HCT116 (cell line): ENCODE measurements at regions of chr14 and their contacts with region 1.

Region 1: GRCh38 chr14:41280745-41281144 is 325.9 kb upstream of the LRFN5 start:
- DNase-seq: no peak
- ATAC-seq: no peak
- H3K4me3 ChIP-seq: no peak overlapping the region
- H3K27ac ChIP-seq: no peak overlapping the region
- H3K4me1 ChIP-seq: no peaks in the 10 kb centered on the region
- H3K27me3 ChIP-seq: no peaks in the 10 kb centered on the region
- CTCF ChIP-seq: peak in 1 of 3 experiments; percentile 35; a peak in 2 of 6 replicates
- POLR2A ChIP-seq: no peak
- RAD21 ChIP-seq: peak; percentile 39; the same call in 1 of the 2 replicates

Region 2: DNA sequence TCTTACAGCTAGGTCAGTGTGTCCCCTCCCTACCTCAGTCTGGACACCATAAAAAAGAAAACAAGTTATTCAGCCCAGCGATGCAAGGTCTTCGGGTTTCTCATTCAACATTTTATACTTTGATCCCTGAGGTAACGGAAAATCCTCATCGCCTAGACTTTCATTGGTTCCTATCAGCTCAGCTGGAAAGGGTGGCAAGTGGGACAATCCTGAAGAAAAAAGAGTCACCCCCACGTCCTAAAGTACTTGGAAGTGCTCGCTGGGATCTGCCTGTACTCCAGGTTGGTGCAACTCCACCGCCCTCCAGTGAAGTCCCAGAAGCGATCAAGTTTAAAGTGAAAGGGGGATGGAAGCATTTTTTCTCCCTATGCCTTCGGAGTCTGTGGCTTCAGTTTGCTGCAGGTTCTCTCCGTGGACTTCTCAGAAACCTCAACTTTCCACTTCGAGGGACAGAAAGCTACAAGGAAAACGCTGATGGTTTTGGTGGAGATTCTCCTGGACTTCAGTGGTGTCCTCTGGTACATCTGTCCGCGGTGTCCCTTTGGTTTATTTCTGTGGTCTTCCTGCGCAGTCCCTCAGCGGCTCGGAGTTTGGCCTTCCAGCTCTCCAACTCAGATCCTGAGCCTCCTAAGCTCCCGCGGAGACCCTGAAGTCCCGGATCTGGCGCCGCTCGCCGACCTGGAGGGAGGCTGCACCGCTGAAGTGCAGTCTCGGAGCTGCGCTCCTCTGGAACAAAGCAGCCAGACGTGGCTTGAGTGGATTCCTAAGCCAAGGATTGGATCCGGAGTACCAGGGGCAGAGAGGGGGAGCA is 324.2 kb after region 1 on chr14:
- CTCF ChIA-PET with region 1: interaction called, 11 read pairs
- POLR2A ChIA-PET with region 1: no interaction called
- RAD21 ChIA-PET with region 1: no interaction called
- intact Hi-C with region 1: loop called (anchors 5 kb)
- DNase-seq: no peak
- ATAC-seq: no peak
- H3K4me3 ChIP-seq: no peak overlapping the region
- H3K27ac ChIP-seq: no peak overlapping the region
- H3K4me1 ChIP-seq: no peaks in the 10 kb centered on the region
- H3K27me3 ChIP-seq: no peaks in the 10 kb centered on the region
- CTCF ChIP-seq: no peak
- POLR2A ChIP-seq: no peak
- RAD21 ChIP-seq: no peak